CD8-positive, alpha-beta T cell (primary cell): ENCODE measurements at regions of chr9 and their contacts with region 1.

Region 1: DNA sequence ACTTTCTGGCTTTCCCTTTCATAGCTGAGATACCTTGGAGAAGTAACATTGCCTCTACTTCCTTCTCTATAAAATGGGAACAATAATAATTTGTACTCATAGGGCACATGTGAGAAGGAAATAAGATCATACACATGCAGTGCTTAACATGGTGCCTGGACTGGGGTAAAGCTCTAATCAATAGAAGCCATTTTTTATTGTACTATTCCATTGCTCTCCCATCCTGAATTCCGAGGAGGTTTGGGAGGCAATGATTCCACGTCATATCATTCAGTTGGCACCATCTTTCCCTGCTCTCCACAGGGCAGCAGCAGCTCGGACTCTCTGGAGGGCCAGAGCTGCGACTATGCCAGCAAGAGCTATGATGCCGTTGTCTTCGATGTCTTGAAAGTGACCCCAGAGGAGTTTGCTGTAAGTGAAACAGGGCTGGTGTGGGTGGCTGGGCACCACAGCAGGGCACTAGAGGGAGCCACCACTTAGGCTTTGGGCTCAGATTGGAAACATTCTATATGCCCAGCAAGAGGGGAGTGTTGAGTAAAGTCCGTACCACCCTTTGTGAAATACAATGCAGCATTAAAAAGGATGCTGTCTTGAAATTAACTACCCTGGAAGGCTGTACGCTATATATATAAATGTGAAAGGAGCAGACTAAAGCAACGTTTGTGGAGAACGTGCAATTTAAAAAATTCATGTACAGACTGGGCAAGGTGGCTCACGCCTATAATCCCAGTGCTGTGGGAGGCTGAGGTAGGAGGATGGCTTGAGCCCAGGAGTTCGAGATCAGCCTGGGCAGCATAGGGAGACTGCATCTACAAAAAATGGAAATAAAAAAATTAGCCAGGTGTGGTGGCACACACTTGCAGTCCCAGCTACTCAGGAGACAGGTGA is 51.2 kb downstream of the RALGPS1 start:
- DNase-seq: peak in 8 of 9 experiments; percentile 17 to 73 (median 56)
- ATAC-seq: peak; percentile 82
- H3K4me3 ChIP-seq: no peak overlapping the region
- H3K4me3 Mint-ChIP-seq: no peak overlapping the region
- H3K27ac ChIP-seq: no peak overlapping the region
- H3K27ac Mint-ChIP-seq: no peak overlapping the region
- H3K4me1 ChIP-seq: no peaks in the 10 kb centered on the region
- H3K4me1 Mint-ChIP-seq: peaks cover 5% of the 10 kb centered on the region
- H3K27me3 ChIP-seq: no peaks in the 10 kb centered on the region
- H3K27me3 Mint-ChIP-seq: peaks cover 10% of the 10 kb centered on the region
- CTCF ChIP-seq: peak; percentile 75

Region 2: DNA sequence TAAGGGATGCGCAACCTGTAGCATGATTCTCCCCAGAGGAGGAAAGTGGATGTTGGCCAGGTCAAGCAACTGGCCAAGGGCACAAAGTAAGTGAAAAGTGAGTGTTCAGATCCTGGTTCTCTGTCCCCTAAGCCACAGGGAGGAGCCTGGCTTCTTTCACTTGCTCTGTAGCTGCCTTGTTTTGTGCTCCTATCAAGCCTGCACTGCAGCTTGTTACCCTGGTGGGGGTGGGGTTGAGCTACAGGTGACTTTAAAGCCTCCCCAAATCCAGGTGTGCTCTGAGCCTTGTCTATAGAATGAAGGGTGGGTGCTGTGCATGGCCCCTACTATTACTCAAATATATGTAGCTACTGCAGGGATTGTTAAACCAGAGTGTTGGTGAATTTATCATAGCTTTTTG is 18.3 kb before region 1 on chr9:
- CTCF ChIA-PET with region 1: interaction called, 20 read pairs
- POLR2A ChIA-PET with region 1: no interaction called
- intact Hi-C with region 1: no loop called
- DNase-seq: peak in 2 of 9 experiments; percentile 17 to 36
- ATAC-seq: peak; percentile 26
- H3K4me3 ChIP-seq: no peak overlapping the region
- H3K4me3 Mint-ChIP-seq: no peak overlapping the region
- H3K27ac ChIP-seq: no peak overlapping the region
- H3K27ac Mint-ChIP-seq: no peak overlapping the region
- H3K4me1 ChIP-seq: no peaks in the 10 kb centered on the region
- H3K4me1 Mint-ChIP-seq: no peaks in the 10 kb centered on the region
- H3K27me3 ChIP-seq: no peaks in the 10 kb centered on the region
- H3K27me3 Mint-ChIP-seq: peaks cover 7% of the 10 kb centered on the region
- CTCF ChIP-seq: no peak

Region 3: DNA sequence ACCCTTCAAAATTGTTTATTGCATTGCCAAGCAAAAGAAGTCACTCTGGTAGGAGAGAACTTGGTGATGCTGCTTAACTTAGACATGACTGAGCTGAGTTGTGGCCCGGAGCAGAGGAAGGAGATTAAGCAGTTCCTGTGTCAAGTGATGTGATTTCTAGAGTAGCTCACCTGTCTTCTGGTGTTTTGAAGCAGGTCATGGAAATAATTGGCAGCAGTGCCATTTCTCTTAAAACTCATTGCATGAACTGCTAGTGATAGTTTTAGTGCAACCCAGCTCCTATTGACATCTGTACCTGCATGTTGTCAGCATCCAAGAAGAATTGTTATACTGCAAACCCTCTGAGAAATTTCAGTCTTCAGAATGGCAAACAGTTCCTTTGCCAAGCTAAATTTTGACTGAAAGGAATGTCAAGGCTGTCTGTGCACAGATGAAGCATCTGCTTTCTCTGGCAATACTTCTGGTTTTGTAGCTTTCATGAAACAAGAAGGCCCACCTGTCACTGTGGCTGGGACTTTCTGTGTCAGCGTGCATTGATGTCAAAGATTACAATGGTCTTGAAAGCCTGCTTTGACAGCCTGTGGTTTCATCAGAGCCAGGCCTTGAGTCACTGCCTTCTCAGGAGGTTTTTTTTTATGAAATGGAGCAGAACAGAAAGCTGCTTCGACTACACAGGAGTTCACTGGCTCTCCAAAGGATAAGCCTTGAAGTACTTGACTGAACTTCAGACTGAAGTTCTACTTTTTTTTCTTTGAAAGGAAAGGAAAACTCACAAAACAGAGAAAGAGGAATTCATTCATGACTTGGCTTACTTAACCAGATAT is 39.4 kb after region 1 on chr9:
- CTCF ChIA-PET with region 1: interaction called, 3 read pairs
- POLR2A ChIA-PET with region 1: no interaction called
- intact Hi-C with region 1: loop called in 1 of 2 experiments (anchors 5 kb)
- DNase-seq: peak; percentile 29 to 92 (median 71)
- ATAC-seq: peak; percentile 95
- H3K4me3 ChIP-seq: no peak overlapping the region
- H3K4me3 Mint-ChIP-seq: peak overlapping the region; percentile 27
- H3K27ac ChIP-seq: peak overlapping the region in 1 of 2 experiments; percentile 0
- H3K27ac Mint-ChIP-seq: peak overlapping the region; percentile 82
- H3K4me1 ChIP-seq: peaks cover 22% of the 10 kb centered on the region
- H3K4me1 Mint-ChIP-seq: peaks cover 20% of the 10 kb centered on the region
- H3K27me3 ChIP-seq: no peaks in the 10 kb centered on the region
- H3K27me3 Mint-ChIP-seq: peaks cover 26% of the 10 kb centered on the region
- CTCF ChIP-seq: no peak

Region 4: DNA sequence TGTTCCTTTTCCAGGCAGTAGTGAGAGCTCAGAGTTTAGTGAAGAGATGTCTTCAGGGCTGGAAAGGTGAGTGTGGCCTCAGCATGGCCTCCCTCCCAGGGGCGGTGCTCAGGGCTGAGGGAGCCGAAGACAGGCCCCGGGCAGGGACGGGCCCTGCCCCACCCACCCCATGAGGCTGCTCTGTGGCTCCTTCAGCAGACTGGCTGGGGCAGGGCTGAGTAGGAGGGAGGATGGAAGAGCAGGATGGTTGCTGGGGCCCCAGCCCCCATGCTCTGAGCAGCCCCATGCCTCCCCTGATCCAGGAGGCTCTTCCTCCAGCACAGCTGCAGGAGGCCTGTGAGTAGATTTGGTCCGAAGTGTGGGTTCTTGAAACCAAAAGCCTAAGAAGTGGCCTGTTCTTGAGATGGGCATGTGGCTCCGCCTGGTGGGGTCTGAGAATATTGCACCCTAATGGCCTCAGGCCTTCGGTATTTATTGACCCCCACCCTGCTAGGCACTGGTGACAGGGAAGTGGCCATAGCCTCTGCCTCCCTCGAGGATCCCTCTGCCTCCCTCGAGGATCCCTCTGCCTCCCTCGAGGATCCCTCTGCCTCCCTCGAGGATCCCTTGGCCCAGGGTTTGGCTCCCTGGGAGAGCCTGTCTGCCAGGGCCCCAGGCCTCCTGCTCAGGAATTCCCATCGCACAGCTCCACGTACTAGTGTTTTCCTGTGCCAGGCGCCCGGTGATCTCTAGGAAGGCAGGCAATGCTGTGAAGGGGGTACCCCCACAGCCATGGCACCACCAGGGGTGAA is 233.4 kb after region 1 on chr9:
- CTCF ChIA-PET with region 1: interaction called, 114 read pairs
- POLR2A ChIA-PET with region 1: no interaction called
- intact Hi-C with region 1: loop called (anchors 1 kb)
- DNase-seq: peak; percentile 59 to 87 (median 79)
- ATAC-seq: peak; percentile 85
- H3K4me3 ChIP-seq: no peak overlapping the region
- H3K4me3 Mint-ChIP-seq: no peak overlapping the region
- H3K27ac ChIP-seq: no peak overlapping the region
- H3K27ac Mint-ChIP-seq: no peak overlapping the region
- H3K4me1 ChIP-seq: peaks cover 12% of the 10 kb centered on the region
- H3K4me1 Mint-ChIP-seq: peaks cover 11% of the 10 kb centered on the region
- H3K27me3 ChIP-seq: peaks cover 0 to 4% of the 10 kb centered on the region in 2 experiments
- H3K27me3 Mint-ChIP-seq: no peaks in the 10 kb centered on the region
- CTCF ChIP-seq: peak; percentile 87

Region 5: DNA sequence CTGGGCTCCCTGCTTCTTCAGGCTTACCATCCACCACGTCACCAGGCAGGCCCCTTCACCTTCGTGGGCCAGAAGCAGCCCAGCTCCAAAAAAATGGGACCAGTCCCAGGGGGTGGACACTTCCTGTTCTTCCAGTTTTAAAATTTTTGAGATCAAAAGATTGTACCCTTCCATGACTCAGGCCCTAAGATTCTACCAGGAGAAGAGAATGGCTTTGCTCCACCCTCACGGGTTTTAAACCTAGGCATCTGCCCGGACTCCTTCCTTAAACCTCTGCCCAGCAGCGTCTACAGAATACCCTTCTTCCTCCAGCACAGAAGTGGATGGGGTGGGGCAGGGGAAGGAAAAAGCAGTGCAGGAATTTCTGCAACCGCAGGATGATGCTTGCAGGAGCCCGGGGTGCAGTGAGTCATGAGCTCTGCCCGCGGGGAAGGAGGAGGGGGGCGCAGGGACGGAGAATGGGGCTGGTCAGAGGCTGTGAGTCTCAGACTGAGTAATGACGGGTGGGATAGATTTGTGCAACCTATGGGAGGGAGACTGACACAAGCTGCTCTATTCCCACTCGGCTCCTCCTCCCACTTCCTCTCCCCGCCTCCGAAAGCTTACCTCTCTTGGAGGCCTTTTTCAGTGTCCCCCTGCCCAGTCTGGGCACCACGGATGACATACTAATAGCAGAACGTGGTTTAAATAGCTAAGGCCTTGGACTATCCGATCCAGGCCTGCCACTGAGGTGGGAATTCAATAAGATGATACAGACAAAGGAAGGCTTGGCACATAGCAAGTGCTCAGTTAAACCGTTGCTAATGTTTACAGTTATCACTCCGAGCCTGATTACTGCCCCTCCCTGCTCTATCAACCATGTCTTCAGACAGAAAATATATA is 596.1 kb after region 1 on chr9:
- CTCF ChIA-PET with region 1: no interaction called
- POLR2A ChIA-PET with region 1: no interaction called
- intact Hi-C with region 1: no loop called
- DNase-seq: peak in 3 of 9 experiments; percentile 16 to 45 (median 17)
- ATAC-seq: no peak
- H3K4me3 ChIP-seq: no peak overlapping the region
- H3K4me3 Mint-ChIP-seq: no peak overlapping the region
- H3K27ac ChIP-seq: no peak overlapping the region
- H3K27ac Mint-ChIP-seq: no peak overlapping the region
- H3K4me1 ChIP-seq: peaks cover 31% of the 10 kb centered on the region
- H3K4me1 Mint-ChIP-seq: peaks cover 45% of the 10 kb centered on the region
- H3K27me3 ChIP-seq: no peaks in the 10 kb centered on the region
- H3K27me3 Mint-ChIP-seq: no peaks in the 10 kb centered on the region
- CTCF ChIP-seq: no peak